CD8-positive, alpha-beta T cell (primary cell): ENCODE measurements at regions of chr1 and their contacts with region 1.

Region 1: GRCh38 chr1:108691942-108692723 is at the start of gene PRPF38B:
- DNase-seq: peak; percentile 85 to 97 (median 94)
- ATAC-seq: peak; percentile 78
- H3K4me3 ChIP-seq: peak within 1 kb of the TSS; percentile 78 to 87
- H3K4me3 Mint-ChIP-seq: peak within 1 kb of the TSS; percentile 97
- H3K27ac ChIP-seq: peak within 1 kb of the TSS; percentile 92 to 97
- H3K27ac Mint-ChIP-seq: peak within 1 kb of the TSS; percentile 100
- H3K4me1 ChIP-seq: peaks cover 36% of the 10 kb centered on the region
- H3K4me1 Mint-ChIP-seq: peaks cover 47% of the 10 kb centered on the region
- H3K27me3 ChIP-seq: no peaks in the 10 kb centered on the region
- H3K27me3 Mint-ChIP-seq: no peaks in the 10 kb centered on the region
- CTCF ChIP-seq: no peak
- total RNA-seq, gene PRPF38B: 108 to 116 TPM

Region 2: DNA sequence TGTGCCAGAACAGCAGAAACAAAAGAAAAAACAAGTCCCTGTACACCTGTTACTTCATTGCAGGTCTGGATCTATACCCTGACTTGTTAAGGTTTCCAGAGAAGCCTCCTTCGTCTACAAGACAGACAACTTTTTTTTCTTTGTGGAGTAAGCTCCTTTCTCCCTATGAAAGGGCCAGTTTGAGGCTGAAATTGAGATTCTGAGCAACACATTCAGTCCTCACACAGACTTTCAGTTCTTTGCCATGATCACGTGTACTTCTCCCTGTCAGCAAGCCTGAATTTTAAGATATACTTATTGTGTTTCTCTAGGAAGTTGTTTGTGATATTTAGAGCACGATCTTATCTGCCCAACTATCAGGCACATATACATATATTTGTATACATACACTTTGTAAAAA is 1177.3 kb before region 1 on chr1:
- CTCF ChIA-PET with region 1: no interaction called
- POLR2A ChIA-PET with region 1: no interaction called
- intact Hi-C with region 1: no loop called
- DNase-seq: no peak
- ATAC-seq: no peak
- H3K4me3 ChIP-seq: no peak overlapping the region
- H3K4me3 Mint-ChIP-seq: no peak overlapping the region
- H3K27ac ChIP-seq: no peak overlapping the region
- H3K27ac Mint-ChIP-seq: no peak overlapping the region
- H3K4me1 ChIP-seq: no peaks in the 10 kb centered on the region
- H3K4me1 Mint-ChIP-seq: no peaks in the 10 kb centered on the region
- H3K27me3 ChIP-seq: no peaks in the 10 kb centered on the region
- H3K27me3 Mint-ChIP-seq: no peaks in the 10 kb centered on the region
- CTCF ChIP-seq: no peak

Region 3: GRCh38 chr1:108199781-108200570 is 492.2 kb before region 1 on chr1 and contains the start of gene SLC25A24:
- CTCF ChIA-PET with region 1: no interaction called
- POLR2A ChIA-PET with region 1: interaction called, 13 read pairs
- intact Hi-C with region 1: no loop called
- DNase-seq: peak; percentile 34 to 85 (median 72)
- ATAC-seq: peak; percentile 94
- H3K4me3 ChIP-seq: peak within 1 kb of the TSS; percentile 75 to 98
- H3K4me3 Mint-ChIP-seq: peak within 1 kb of the TSS; percentile 88
- H3K27ac ChIP-seq: peak within 1 kb of the TSS; percentile 70 to 72
- H3K27ac Mint-ChIP-seq: peak within 1 kb of the TSS; percentile 87
- H3K4me1 ChIP-seq: peaks cover 12% of the 10 kb centered on the region
- H3K4me1 Mint-ChIP-seq: peaks cover 31% of the 10 kb centered on the region
- H3K27me3 ChIP-seq: no peaks in the 10 kb centered on the region
- H3K27me3 Mint-ChIP-seq: no peaks in the 10 kb centered on the region
- CTCF ChIP-seq: no peak
- total RNA-seq, gene SLC25A24: 3.3 to 4.3 TPM

Region 4: GRCh38 chr1:108643492-108644335 is 48.4 kb before region 1 on chr1:
- CTCF ChIA-PET with region 1: interaction called, 58 read pairs
- POLR2A ChIA-PET with region 1: interaction called, 234 read pairs
- intact Hi-C with region 1: loop called (anchors 1 kb)
- DNase-seq: peak in 6 of 9 experiments; percentile 27 to 87 (median 58)
- ATAC-seq: peak; percentile 15
- H3K4me3 ChIP-seq: no peak overlapping the region
- H3K4me3 Mint-ChIP-seq: peak overlapping the region; percentile 10
- H3K27ac ChIP-seq: peak overlapping the region; percentile 77 to 92
- H3K27ac Mint-ChIP-seq: peak overlapping the region; percentile 100
- H3K4me1 ChIP-seq: peaks cover 69% of the 10 kb centered on the region
- H3K4me1 Mint-ChIP-seq: peaks cover 77% of the 10 kb centered on the region
- H3K27me3 ChIP-seq: no peaks in the 10 kb centered on the region
- H3K27me3 Mint-ChIP-seq: no peaks in the 10 kb centered on the region
- CTCF ChIP-seq: peak; percentile 69

Region 5: GRCh38 chr1:108746372-108747205 is 54.5 kb after region 1 on chr1 and contains the start of gene STXBP3:
- CTCF ChIA-PET with region 1: interaction called, 7 read pairs
- POLR2A ChIA-PET with region 1: interaction called, 10 read pairs
- intact Hi-C with region 1: loop called (anchors 1 kb)
- DNase-seq: peak; percentile 99 to 100 (median 100)
- ATAC-seq: peak; percentile 92
- H3K4me3 ChIP-seq: peak within 1 kb of the TSS; percentile 72 to 98
- H3K4me3 Mint-ChIP-seq: peak within 1 kb of the TSS; percentile 98
- H3K27ac ChIP-seq: peak within 1 kb of the TSS; percentile 82 to 97
- H3K27ac Mint-ChIP-seq: peak within 1 kb of the TSS; percentile 99
- H3K4me1 ChIP-seq: peaks cover 26% of the 10 kb centered on the region
- H3K4me1 Mint-ChIP-seq: peaks cover 34% of the 10 kb centered on the region
- H3K27me3 ChIP-seq: no peaks in the 10 kb centered on the region
- H3K27me3 Mint-ChIP-seq: no peaks in the 10 kb centered on the region
- CTCF ChIP-seq: peak; percentile 84
- total RNA-seq, gene STXBP3: 49.0 to 50.4 TPM

Region 6: DNA sequence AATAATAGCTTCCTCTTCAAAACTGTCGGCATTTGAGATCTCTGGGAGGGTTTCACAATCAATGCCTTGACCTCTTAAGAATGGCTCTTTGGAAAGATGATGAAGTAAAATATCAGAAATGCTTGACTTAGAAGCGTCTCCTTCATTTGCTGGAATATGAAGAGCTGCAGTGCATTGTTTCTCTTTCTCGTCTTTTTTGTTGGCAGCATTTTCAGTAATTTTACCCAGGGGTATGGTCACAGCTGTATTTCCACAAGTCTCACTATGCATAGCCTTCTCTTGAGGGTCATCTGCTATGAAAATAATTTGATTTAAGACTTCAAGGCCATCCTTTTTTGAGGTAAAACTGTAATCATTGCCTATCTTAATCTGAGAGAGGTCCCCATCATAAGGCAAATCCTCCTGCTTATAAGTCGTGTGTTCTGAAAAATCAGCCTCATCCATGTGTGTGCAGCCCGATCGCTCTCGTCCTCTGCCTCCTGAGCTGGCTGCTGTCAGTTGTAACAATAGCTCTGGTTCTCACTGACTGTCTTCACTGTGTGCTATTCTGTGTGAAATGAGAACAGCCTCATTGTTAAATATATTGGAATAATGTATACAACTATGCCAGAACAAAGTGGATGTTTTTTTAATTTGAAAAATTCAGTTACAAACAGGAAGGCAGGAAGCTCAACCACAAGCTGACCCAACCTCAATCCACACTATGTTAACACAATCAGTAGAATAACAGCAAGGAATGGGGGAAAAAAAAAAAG is 160.3 kb after region 1 on chr1:
- CTCF ChIA-PET with region 1: no interaction called
- POLR2A ChIA-PET with region 1: no interaction called
- intact Hi-C with region 1: no loop called
- DNase-seq: no peak
- ATAC-seq: no peak
- H3K4me3 ChIP-seq: no peak overlapping the region
- H3K4me3 Mint-ChIP-seq: no peak overlapping the region
- H3K27ac ChIP-seq: no peak overlapping the region
- H3K27ac Mint-ChIP-seq: no peak overlapping the region
- H3K4me1 ChIP-seq: no peaks in the 10 kb centered on the region
- H3K4me1 Mint-ChIP-seq: peaks cover 4% of the 10 kb centered on the region
- H3K27me3 ChIP-seq: no peaks in the 10 kb centered on the region
- H3K27me3 Mint-ChIP-seq: peaks cover 14% of the 10 kb centered on the region
- CTCF ChIP-seq: no peak

Region 7: GRCh38 chr1:108897865-108898720 is 206.0 kb after region 1 on chr1:
- CTCF ChIA-PET with region 1: interaction called, 4 read pairs
- POLR2A ChIA-PET with region 1: interaction called, 4 read pairs
- intact Hi-C with region 1: loop called (anchors 1 to 2 kb)
- DNase-seq: peak in 5 of 9 experiments; percentile 9 to 74 (median 35)
- ATAC-seq: peak; percentile 78
- H3K4me3 ChIP-seq: no peak overlapping the region
- H3K4me3 Mint-ChIP-seq: no peak overlapping the region
- H3K27ac ChIP-seq: no peak overlapping the region
- H3K27ac Mint-ChIP-seq: no peak overlapping the region
- H3K4me1 ChIP-seq: no peaks in the 10 kb centered on the region
- H3K4me1 Mint-ChIP-seq: no peaks in the 10 kb centered on the region
- H3K27me3 ChIP-seq: no peaks in the 10 kb centered on the region
- H3K27me3 Mint-ChIP-seq: peaks cover 2% of the 10 kb centered on the region
- CTCF ChIP-seq: peak; percentile 68

Region 8: DNA sequence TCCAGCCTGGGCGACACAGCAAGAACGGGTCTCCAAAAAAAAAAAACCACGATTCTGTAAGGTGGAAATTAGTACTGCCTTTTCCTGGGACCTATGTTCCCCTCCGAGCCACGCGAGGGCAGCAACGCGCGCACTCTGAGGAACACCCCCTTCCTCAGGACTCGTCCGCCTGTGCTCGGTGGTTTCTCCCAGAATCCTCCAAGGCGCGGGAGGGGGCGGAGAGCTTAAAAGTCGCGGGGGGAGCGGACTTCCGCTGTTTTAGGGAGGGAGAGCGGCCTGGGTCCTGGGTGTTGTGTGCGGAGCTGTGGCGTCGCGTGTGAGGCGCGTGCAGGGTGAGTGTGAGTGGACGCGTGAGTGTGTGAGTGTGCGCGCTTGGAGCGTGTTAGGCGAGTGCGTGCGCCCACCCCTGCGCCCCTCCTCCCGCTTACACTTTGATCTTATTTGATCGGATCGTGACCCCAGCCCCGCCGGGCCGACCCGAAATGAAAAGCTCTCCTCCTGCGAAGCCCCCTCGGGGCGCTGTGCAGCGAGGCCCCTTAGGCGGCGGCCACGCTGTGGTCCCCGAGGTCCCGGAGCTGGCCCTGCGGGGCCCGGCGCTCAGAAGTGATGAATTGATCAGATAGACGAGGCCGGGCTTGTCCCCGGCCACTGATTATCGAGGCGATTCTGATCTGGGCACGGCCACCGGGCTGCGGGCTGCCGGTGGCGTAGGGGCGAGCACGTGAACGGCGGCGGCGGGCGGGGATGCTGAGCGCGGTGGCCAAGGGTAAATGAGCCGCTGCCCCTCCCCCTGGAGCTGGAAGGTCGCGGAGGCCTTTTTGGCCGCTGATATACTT is 408.0 kb after region 1 on chr1:
- CTCF ChIA-PET with region 1: interaction called, 4 read pairs
- POLR2A ChIA-PET with region 1: interaction called, 13 read pairs
- intact Hi-C with region 1: no loop called
- DNase-seq: peak; percentile 95 to 98 (median 97)
- ATAC-seq: peak; percentile 91
- H3K4me3 ChIP-seq: peak overlapping the region; percentile 88 to 93
- H3K4me3 Mint-ChIP-seq: peak overlapping the region; percentile 98
- H3K27ac ChIP-seq: peak overlapping the region; percentile 86 to 93
- H3K27ac Mint-ChIP-seq: peak overlapping the region; percentile 99
- H3K4me1 ChIP-seq: peaks cover 9% of the 10 kb centered on the region
- H3K4me1 Mint-ChIP-seq: peaks cover 18% of the 10 kb centered on the region
- H3K27me3 ChIP-seq: no peaks in the 10 kb centered on the region
- H3K27me3 Mint-ChIP-seq: no peaks in the 10 kb centered on the region
- CTCF ChIP-seq: peak; percentile 83

Region 9: DNA sequence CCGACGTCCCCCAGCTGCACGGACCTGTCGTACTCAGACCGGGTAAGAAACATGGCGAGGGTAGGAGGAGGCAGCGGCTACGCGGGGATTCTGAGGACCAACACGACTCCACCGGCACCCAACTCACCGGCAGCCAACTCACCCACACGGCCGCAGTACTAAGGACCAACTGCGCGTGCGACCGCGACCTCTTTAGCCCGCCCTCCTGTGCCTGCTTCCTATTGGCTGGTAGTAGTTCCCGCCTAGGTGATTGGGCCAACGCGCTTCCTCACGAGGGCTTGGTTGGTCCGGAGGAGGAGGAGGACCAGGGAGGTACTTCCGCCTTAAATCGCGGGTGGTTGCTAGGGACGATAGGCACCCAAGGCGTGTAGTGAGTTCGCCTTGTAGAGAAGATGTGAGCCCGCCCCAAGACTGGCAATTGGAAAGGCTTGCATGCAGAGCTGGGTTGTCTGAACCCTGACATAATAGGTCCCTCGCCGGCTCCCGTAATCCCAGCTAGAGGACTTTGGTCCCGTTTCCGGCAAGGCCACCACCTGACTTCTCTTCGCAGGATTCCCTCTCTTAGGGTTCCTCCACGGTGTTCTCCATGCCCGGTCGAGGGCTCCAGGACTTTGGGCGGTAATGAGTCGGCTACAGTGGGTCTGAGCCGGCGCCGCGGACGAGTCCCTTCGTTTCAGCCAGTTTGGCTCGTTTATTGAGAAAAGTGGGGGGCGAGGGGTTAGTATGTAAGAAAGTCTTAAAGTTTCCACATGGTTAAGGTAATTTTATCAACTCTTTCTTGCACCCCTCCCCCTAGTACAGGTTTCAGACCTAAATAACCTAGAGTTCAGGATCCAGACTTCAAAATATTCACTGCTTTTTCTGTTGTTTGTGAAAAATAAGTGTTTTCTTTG is 734.4 kb after region 1 on chr1 and contains the start of gene PSMA5:
- CTCF ChIA-PET with region 1: no interaction called
- POLR2A ChIA-PET with region 1: interaction called, 5 read pairs
- intact Hi-C with region 1: loop called in 1 of 2 experiments (anchors 5 kb)
- DNase-seq: peak; percentile 87 to 99 (median 93)
- ATAC-seq: peak; percentile 90
- H3K4me3 ChIP-seq: peak within 1 kb of the TSS; percentile 83 to 84
- H3K4me3 Mint-ChIP-seq: peak within 1 kb of the TSS; percentile 98
- H3K27ac ChIP-seq: peak within 1 kb of the TSS; percentile 80 to 90
- H3K27ac Mint-ChIP-seq: peak within 1 kb of the TSS; percentile 99
- H3K4me1 ChIP-seq: peaks cover 39% of the 10 kb centered on the region
- H3K4me1 Mint-ChIP-seq: peaks cover 39% of the 10 kb centered on the region
- H3K27me3 ChIP-seq: no peaks in the 10 kb centered on the region
- H3K27me3 Mint-ChIP-seq: no peaks in the 10 kb centered on the region
- CTCF ChIP-seq: no peak
- total RNA-seq, gene PSMA5: 30.9 to 32.6 TPM